ENCODE measurements at regions of chr5 and their contacts with region 1.

Region 1: GRCh38 chr5:132293066-132293991 is 865 bp upstream of the SLC22A4 start:
- DNase-seq: peak; percentile 66
- H3K4me3 ChIP-seq: peak overlapping the region; percentile 82
- H3K27ac ChIP-seq: peak overlapping the region; percentile 99
- H3K27me3 ChIP-seq: no peaks in the 10 kb centered on the region
- CTCF ChIP-seq: peak; percentile 18; the same call in 1 of the 2 replicates

Region 2: DNA sequence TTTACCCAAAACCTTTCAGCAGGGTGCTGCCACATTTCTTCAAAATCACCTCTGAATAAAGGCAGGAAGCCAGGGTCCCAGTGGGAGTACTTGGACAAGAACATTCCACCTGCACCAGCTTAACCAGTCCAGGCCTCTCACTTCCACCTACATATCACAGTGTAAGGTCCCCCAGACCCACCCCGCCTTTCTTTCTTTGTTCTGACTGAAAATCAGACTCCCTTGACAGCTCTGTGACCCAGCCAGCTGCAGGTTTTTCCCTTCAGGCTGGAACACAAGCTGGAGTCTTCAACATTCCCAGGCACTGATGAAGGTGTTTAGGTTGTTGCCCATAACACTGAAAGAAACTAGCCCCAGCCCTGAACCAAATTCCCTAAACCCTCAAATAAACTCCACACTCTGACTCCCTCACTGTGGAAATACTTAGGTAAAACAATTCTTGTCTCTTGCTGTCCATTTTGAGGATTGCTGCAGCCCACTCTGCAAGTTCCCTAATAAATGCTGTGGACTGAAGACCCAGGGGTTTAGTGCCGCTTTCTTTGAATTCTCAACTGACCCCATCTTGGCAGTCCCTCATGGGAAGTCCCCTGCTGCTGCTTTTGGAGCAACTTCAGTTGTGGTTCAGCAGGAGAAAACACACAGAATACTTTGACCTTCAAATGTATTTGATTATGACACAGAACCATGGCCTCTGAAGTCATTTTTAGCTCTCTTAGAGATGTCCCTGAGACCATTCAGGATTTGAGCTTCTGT is 90.4 kb before region 1 on chr5:
- CTCF ChIA-PET with region 1: no interaction called
- POLR2A ChIA-PET with region 1: no interaction called
- DNase-seq: no peak
- H3K4me3 ChIP-seq: no peak overlapping the region
- H3K27ac ChIP-seq: no peak overlapping the region
- H3K27me3 ChIP-seq: no peaks in the 10 kb centered on the region
- CTCF ChIP-seq: no peak

Region 3: DNA sequence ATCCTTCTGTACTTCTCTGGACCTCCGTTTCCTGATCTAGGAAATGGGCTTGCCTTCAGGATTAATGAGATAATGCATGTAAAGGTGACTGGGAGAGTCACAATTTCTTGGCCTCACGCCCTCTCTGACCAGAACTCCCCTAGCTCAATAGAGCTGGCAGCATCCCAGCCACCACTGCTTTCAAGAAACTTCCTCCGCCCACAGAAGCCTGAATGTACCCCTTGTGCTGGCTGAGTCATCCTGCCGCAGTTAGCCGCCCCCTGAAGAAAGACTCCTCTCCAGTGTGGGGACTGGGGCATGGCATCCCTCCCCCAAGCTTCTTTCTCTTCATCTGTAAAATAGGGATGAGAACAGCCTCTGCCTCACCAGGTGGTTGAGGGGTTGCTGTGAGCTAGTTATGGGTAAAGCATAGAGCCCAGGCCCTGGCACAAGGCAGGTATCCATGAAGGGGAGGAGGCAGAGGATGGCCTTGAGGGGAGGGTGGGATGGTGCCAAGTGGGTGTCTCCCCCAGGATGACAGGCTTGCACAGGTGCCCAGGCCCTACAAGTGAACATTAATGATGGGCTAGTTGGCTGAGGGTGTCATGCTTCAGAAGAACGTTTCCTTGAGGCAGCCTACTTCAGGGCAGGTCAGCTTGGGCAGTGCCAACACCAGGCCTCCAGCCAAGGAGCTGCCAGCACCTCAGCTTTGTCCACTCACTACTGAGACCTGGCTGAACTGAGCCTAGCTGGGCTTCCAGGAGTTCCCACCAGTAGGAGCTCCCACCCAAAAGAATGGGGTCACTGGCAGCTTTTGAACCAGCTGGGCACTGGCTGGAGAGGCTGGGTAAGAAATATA is 32.4 kb before region 1 on chr5:
- CTCF ChIA-PET with region 1: interaction called, 3 read pairs
- POLR2A ChIA-PET with region 1: interaction called, 20 read pairs
- DNase-seq: peak; percentile 56
- H3K4me3 ChIP-seq: peak overlapping the region; percentile 37
- H3K27ac ChIP-seq: peak overlapping the region; percentile 42
- H3K27me3 ChIP-seq: no peaks in the 10 kb centered on the region
- CTCF ChIP-seq: no peak

Region 4: GRCh38 chr5:132272311-132273210 is 20.8 kb before region 1 on chr5:
- CTCF ChIA-PET with region 1: interaction called, 19 read pairs
- POLR2A ChIA-PET with region 1: interaction called, 6 read pairs
- DNase-seq: no peak
- H3K4me3 ChIP-seq: no peak overlapping the region
- H3K27ac ChIP-seq: no peak overlapping the region
- H3K27me3 ChIP-seq: no peaks in the 10 kb centered on the region
- CTCF ChIP-seq: peak; percentile 85

Region 5: GRCh38 chr5:132369474-132370180 is 76.3 kb after region 1 on chr5 and contains the start of gene SLC22A5:
- CTCF ChIA-PET with region 1: interaction called, 3 read pairs
- POLR2A ChIA-PET with region 1: interaction called, 10 read pairs
- DNase-seq: no peak
- H3K4me3 ChIP-seq: peak within 1 kb of the TSS; percentile 65
- H3K27ac ChIP-seq: no peak within 1 kb of the TSS
- H3K27me3 ChIP-seq: no peaks in the 10 kb centered on the region
- CTCF ChIP-seq: no peak
- polyA plus RNA-seq, gene SLC22A5: 6.9 TPM in 2 replicates

Region 6: GRCh38 chr5:132674671-132675506 is 381.6 kb after region 1 on chr5:
- CTCF ChIA-PET with region 1: no interaction called
- POLR2A ChIA-PET with region 1: interaction called, 13 read pairs
- DNase-seq: peak; percentile 91
- H3K4me3 ChIP-seq: no peak overlapping the region
- H3K27ac ChIP-seq: peak overlapping the region; percentile 95
- H3K27me3 ChIP-seq: no peaks in the 10 kb centered on the region
- CTCF ChIP-seq: no peak

Measured in AG04450 (cell line).